Psoas muscle (tissue), 8 donors: ENCODE measurements at regions of chr10 and their contacts with region 1.

Region 1: GRCh38 chr10:112789248-112789647 is 160.8 kb upstream of the TCF7L2 start:
- DNase-seq: no peak
- ATAC-seq: no peak
- H3K4me3 ChIP-seq: no peak overlapping the region
- H3K27ac ChIP-seq: no peak overlapping the region
- H3K4me1 ChIP-seq: peaks cover 7% of the 10 kb centered on the region
- H3K27me3 ChIP-seq: no peaks in the 10 kb centered on the region
- CTCF ChIP-seq: no peak

Region 2: GRCh38 chr10:112663234-112664125 is 125.8 kb before region 1 on chr10:
- intact Hi-C with region 1: no loop called
- DNase-seq: no peak
- ATAC-seq: no peak
- H3K4me3 ChIP-seq: no peak overlapping the region
- H3K27ac ChIP-seq: no peak overlapping the region
- H3K4me1 ChIP-seq: no peaks in the 10 kb centered on the region
- H3K27me3 ChIP-seq: no peaks in the 10 kb centered on the region
- CTCF ChIP-seq: no peak

Region 3: GRCh38 chr10:112721080-112721698 is 68.1 kb before region 1 on chr10:
- intact Hi-C with region 1: no loop called
- DNase-seq: no peak
- ATAC-seq: peak in 2 of 4 donors; percentile 54 to 80
- H3K4me3 ChIP-seq: no peak overlapping the region
- H3K27ac ChIP-seq: no peak overlapping the region
- H3K4me1 ChIP-seq: no peaks in the 10 kb centered on the region
- H3K27me3 ChIP-seq: no peaks in the 10 kb centered on the region
- CTCF ChIP-seq: peak; percentile 68

Region 4: DNA sequence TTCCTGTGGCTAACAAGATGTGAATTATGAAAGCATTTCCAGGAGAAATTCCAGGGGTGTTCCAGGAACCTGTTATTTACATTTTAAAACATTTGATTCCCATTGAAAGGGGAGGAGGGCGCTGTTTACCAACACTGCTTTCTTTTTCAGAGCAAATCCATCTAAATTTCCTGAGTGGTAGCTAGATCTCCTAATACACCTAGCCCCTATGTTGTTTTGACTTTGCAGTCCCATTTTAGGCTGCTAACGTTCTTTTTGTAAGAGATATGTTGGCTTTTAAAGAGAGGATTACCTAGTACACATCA is 291.6 kb after region 1 on chr10:
- intact Hi-C with region 1: loop called in 1 of 2 experiments (anchors 5 kb)
- DNase-seq: no peak
- ATAC-seq: no peak
- H3K4me3 ChIP-seq: no peak overlapping the region
- H3K27ac ChIP-seq: no peak overlapping the region
- H3K4me1 ChIP-seq: no peaks in the 10 kb centered on the region
- H3K27me3 ChIP-seq: no peaks in the 10 kb centered on the region
- CTCF ChIP-seq: no peak